Endothelial cell of umbilical vein (primary cell): ENCODE measurements at regions of chr6 and their contacts with region 1.

Region 1: DNA sequence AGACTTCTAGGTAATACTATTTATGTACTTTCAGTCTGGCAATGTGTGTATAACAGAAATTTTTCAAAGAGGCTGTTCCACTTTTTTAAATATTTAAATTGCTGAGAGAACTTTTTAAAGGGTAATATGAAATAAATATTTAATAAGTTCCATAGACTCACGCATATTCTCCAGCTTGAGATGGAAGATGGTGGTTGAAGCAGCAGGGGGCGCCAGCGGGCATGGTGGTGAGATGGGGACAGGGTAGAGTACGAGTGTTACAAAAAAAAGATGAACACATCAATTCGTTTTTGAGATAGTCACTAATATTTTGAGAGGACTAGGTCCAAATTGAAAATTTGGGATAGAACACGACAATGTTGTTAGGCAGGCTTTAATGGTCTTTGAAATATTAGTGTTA is 68.4 kb downstream of the RSPO3 start:
- DNase-seq: no peak
- H3K4me3 ChIP-seq: no peak overlapping the region
- H3K27ac ChIP-seq: no peak overlapping the region
- H3K4me1 ChIP-seq: no peaks in the 10 kb centered on the region
- H3K27me3 ChIP-seq: no peaks in the 10 kb centered on the region
- CTCF ChIP-seq: peak in 1 of 2 donors; percentile 24
- POLR2A ChIP-seq: no peak

Region 2: DNA sequence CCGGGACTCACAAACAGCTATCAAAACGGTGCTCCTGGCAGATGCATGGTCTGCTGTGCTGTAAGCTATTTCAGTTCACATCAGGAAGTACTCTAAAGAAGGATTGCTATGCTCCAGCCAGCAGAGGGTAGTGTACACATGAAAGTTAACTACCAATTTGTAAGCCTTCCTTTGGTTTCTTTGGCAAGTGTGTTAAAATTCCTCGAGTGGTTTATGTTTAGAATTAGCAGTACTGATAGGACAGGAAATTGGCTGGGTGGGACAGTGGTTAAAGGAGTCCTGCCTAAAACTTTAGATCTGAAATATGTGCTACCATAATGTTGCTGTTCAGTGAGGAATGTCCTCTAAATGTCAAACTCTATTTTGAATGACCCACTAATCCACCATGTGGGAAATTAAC is 1153.2 kb before region 1 on chr6:
- CTCF ChIA-PET with region 1: interaction called, 21 read pairs
- POLR2A ChIA-PET with region 1: no interaction called
- dilution Hi-C with region 1: no loop called
- intact Hi-C with region 1: loop called (anchors 5 kb)
- DNase-seq: peak; percentile 78
- H3K4me3 ChIP-seq: no peak overlapping the region
- H3K27ac ChIP-seq: no peak overlapping the region
- H3K4me1 ChIP-seq: no peaks in the 10 kb centered on the region
- H3K27me3 ChIP-seq: no peaks in the 10 kb centered on the region
- CTCF ChIP-seq: peak; percentile 56 to 65
- POLR2A ChIP-seq: no peak

Region 3: DNA sequence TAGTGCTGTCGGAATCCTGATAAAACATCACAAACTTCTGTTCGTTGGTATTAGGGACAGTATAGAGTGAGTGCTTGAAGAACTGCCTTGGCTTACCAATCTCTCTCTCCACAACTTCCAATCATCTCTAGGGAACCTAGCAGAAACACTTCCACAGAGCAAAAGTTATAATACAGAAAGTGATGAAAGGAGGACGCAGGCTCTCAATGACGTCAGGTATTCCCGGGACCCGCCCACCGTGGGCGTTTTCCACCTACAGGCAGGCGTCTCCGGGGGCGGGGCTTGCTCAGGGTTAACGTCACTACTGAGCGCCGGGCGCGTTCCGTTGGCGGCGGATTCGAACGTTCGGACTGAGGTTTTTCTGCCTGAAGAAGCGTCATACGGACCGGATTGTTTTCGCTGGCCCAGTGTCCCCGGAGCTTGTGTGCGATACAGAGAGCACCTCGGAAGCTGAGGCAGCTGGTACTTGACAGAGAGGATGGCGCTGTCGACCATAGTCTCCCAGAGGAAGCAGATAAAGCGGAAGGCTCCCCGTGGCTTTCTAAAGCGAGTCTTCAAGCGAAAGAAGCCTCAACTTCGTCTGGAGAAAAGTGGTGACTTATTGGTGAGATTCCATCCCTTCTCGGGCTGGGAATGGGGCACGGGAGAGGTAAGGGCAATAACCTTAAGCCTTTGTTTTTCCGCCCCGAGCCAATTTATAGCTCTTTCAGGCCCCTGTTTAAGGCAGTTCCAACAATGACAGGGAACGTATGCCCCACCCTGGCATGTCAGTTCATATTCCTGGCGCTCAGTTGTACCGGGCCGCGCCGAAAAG is 846.9 kb before region 1 on chr6 and contains the start of gene CENPW:
- CTCF ChIA-PET with region 1: interaction called, 5 read pairs
- POLR2A ChIA-PET with region 1: no interaction called
- dilution Hi-C with region 1: no loop called
- intact Hi-C with region 1: loop called (anchors 5 kb)
- DNase-seq: peak; percentile 92
- H3K4me3 ChIP-seq: peak within 1 kb of the TSS; percentile 62 to 99 (median 98)
- H3K27ac ChIP-seq: peak within 1 kb of the TSS; percentile 61
- H3K4me1 ChIP-seq: peaks cover 15% of the 10 kb centered on the region
- H3K27me3 ChIP-seq: peaks cover 0 to 2% of the 10 kb centered on the region in 2 experiments
- CTCF ChIP-seq: no peak
- POLR2A ChIP-seq: peak; percentile 56
- total RNA-seq, gene CENPW: 82.7 and 85.8 TPM in 2 replicates

Region 4: GRCh38 chr6:126657561-126658175 is 529.2 kb before region 1 on chr6:
- CTCF ChIA-PET with region 1: interaction called, 9 read pairs
- POLR2A ChIA-PET with region 1: no interaction called
- dilution Hi-C with region 1: no loop called
- intact Hi-C with region 1: loop called (anchors 5 kb)
- DNase-seq: peak; percentile 56
- H3K4me3 ChIP-seq: no peak overlapping the region
- H3K27ac ChIP-seq: no peak overlapping the region
- H3K4me1 ChIP-seq: no peaks in the 10 kb centered on the region
- H3K27me3 ChIP-seq: no peaks in the 10 kb centered on the region
- CTCF ChIP-seq: peak; percentile 36 to 41
- POLR2A ChIP-seq: no peak

Region 5: GRCh38 chr6:126773112-126773805 is 413.6 kb before region 1 on chr6:
- CTCF ChIA-PET with region 1: no interaction called
- POLR2A ChIA-PET with region 1: no interaction called
- dilution Hi-C with region 1: no loop called
- intact Hi-C with region 1: no loop called
- DNase-seq: peak; percentile 57
- H3K4me3 ChIP-seq: no peak overlapping the region
- H3K27ac ChIP-seq: no peak overlapping the region
- H3K4me1 ChIP-seq: no peaks in the 10 kb centered on the region
- H3K27me3 ChIP-seq: no peaks in the 10 kb centered on the region
- CTCF ChIP-seq: no peak
- POLR2A ChIP-seq: no peak

Region 6: DNA sequence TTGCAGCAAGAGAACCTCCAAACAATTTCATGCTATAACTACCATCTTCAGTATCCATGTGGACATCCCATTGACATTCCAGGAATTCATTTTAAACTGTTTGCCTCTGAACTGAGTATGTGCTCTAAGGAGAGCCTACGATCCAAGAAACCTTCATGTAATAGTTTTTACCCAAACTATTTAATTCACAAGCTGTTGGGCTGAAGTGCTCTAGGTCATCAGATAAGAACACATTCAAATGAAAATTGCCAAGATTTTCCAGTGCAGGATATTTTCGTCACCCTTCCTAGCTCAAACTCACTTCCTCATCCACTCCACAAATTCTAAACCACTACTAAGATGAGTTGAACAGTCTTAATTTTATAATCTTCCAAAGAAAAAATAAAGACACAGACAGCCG is 55.6 kb before region 1 on chr6:
- CTCF ChIA-PET with region 1: interaction called, 20 read pairs
- POLR2A ChIA-PET with region 1: no interaction called
- dilution Hi-C with region 1: no loop called
- intact Hi-C with region 1: no loop called
- DNase-seq: peak; percentile 55
- H3K4me3 ChIP-seq: no peak overlapping the region
- H3K27ac ChIP-seq: no peak overlapping the region
- H3K4me1 ChIP-seq: peaks cover 16% of the 10 kb centered on the region
- H3K27me3 ChIP-seq: no peaks in the 10 kb centered on the region
- CTCF ChIP-seq: no peak
- POLR2A ChIP-seq: no peak

Region 7: DNA sequence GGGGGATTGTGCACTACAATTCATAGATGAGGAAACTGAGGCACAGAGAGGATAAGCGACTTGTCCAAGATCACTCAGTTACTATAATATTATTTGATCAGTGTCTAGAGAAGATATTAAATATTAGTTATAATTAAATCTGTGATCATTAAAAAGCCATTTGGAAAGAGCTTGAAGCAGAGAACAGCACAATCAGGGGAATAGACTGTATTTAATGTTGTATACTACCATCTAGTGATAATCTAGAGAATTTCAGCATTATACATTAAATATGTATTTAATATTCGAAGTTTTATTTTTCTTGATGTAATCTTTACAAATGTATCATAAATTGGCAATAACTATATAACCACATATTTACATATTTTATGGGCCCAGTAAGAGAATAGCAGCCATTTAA is 352.4 kb after region 1 on chr6:
- CTCF ChIA-PET with region 1: interaction called, 17 read pairs
- POLR2A ChIA-PET with region 1: no interaction called
- dilution Hi-C with region 1: no loop called
- intact Hi-C with region 1: no loop called
- DNase-seq: peak; percentile 26
- H3K4me3 ChIP-seq: no peak overlapping the region
- H3K27ac ChIP-seq: no peak overlapping the region
- H3K4me1 ChIP-seq: no peaks in the 10 kb centered on the region
- H3K27me3 ChIP-seq: peaks cover 12 to 17% of the 10 kb centered on the region in 2 experiments
- CTCF ChIP-seq: peak in 1 of 2 donors; percentile 3
- POLR2A ChIP-seq: no peak